ENCODE measurements at regions of chr16 and their contacts with region 1.

Region 1: GRCh38 chr16:27203429-27204231 is at the start of gene KDM8:
- DNase-seq: peak; percentile 100
- ATAC-seq: peak; percentile 90
- H3K4me3 Mint-ChIP-seq: peak within 1 kb of the TSS; percentile 89
- H3K27ac Mint-ChIP-seq: peak within 1 kb of the TSS; percentile 100
- H3K4me1 Mint-ChIP-seq: peaks cover 47% of the 10 kb centered on the region
- H3K27me3 Mint-ChIP-seq: no peaks in the 10 kb centered on the region
- total RNA-seq, gene KDM8: 9.8 to 10.4 TPM

Region 2: DNA sequence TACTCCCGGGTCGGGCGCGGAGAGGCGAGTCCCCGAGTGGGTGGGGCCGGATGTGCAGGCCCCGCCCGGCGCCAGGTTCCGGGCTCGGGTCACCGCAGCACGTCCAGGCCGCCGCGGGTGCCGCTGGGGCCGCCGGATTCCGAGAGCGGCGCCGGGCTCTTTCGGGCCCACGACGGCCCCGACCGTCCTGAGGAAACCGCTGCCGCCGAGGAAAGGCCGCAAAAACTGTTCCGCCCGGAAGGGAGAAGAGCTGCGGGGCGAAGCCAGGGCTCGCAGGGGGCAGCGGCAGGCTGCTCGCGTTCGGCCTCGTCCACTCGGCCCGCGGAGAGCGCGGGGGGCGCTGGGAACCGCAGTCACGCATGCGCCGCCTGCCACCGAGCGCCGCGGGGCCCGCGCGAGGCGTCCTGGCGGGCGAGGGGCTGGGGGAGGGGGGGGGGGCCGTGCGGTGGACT is 1946.1 kb before region 1 on chr16 and contains the start of gene ZKSCAN2:
- CTCF ChIA-PET with region 1: no interaction called
- POLR2A ChIA-PET with region 1: no interaction called
- intact Hi-C with region 1: loop called in 1 of 2 experiments (anchors 5 kb)
- DNase-seq: peak; percentile 92
- ATAC-seq: peak; percentile 82
- H3K4me3 Mint-ChIP-seq: peak within 1 kb of the TSS; percentile 93
- H3K27ac Mint-ChIP-seq: peak within 1 kb of the TSS; percentile 98
- H3K4me1 Mint-ChIP-seq: peaks cover 59% of the 10 kb centered on the region
- H3K27me3 Mint-ChIP-seq: no peaks in the 10 kb centered on the region
- total RNA-seq, gene ZKSCAN2: 5.5 to 5.6 TPM

Region 3: GRCh38 chr16:27127308-27127707 is 76.3 kb before region 1 on chr16:
- CTCF ChIA-PET with region 1: no interaction called
- POLR2A ChIA-PET with region 1: no interaction called
- intact Hi-C with region 1: no loop called
- DNase-seq: no peak
- ATAC-seq: no peak
- H3K4me3 Mint-ChIP-seq: no peak overlapping the region
- H3K27ac Mint-ChIP-seq: no peak overlapping the region
- H3K4me1 Mint-ChIP-seq: no peaks in the 10 kb centered on the region
- H3K27me3 Mint-ChIP-seq: no peaks in the 10 kb centered on the region

Region 4: GRCh38 chr16:27154705-27155521 is 48.7 kb before region 1 on chr16:
- CTCF ChIA-PET with region 1: interaction called, 6 read pairs
- POLR2A ChIA-PET with region 1: no interaction called
- intact Hi-C with region 1: loop called in 1 of 2 experiments (anchors 1 kb)
- DNase-seq: peak; percentile 86
- ATAC-seq: peak; percentile 87
- H3K4me3 Mint-ChIP-seq: no peak overlapping the region
- H3K27ac Mint-ChIP-seq: no peak overlapping the region
- H3K4me1 Mint-ChIP-seq: peaks cover 9% of the 10 kb centered on the region
- H3K27me3 Mint-ChIP-seq: no peaks in the 10 kb centered on the region

Region 5: GRCh38 chr16:27169511-27170071 is 34.0 kb before region 1 on chr16:
- CTCF ChIA-PET with region 1: interaction called, 5 read pairs
- POLR2A ChIA-PET with region 1: interaction called, 4 read pairs
- intact Hi-C with region 1: loop called (anchors 1 to 5 kb)
- DNase-seq: peak; percentile 86
- ATAC-seq: peak; percentile 92
- H3K4me3 Mint-ChIP-seq: peak overlapping the region; percentile 3
- H3K27ac Mint-ChIP-seq: peak overlapping the region; percentile 74
- H3K4me1 Mint-ChIP-seq: peaks cover 68% of the 10 kb centered on the region
- H3K27me3 Mint-ChIP-seq: no peaks in the 10 kb centered on the region

Region 6: DNA sequence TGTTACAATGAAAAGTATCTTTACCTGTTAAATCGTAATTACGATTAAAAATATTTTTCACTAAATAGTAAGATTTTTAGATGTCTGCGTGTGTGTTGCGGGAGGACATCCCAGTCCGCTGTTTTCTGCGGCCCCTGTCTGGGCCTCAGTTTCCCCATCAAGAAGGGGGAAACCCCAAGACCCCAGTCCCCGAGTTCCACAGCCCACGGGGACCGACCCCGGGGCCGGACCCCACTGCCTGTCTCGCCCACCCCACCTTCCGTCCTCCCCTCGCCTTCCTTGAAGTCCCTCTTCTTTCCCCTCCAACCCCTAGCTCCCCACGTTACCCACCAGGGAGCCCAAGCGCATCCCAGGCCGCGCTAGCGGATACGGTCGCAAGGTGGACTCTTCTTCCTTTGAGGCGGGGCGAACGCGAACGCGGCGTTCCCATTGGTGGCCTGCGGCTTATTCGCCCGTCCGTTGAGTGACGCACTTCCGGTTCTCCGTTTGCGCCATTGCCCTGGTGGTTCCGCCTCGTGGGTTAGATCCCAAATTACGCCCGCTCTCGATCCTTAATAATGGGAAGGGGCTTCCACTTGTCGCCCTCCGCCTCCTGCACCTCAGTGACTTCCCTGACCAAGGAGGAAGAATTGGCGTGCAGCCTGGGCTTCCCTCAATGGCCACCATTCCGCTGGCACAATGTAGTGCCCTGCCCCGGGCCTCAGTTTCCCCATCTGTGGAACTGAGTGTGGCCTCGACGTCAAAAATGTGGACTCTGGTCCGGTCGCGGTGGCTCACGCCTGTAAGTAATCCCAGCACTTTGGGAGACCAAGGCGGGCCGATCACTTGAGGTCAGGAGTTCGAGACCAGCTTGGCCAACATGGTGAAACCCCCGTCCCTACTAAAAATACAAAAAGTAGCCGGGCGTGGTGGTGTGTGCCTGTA is 65.0 kb after region 1 on chr16 and contains the start of gene NSMCE1:
- CTCF ChIA-PET with region 1: no interaction called
- POLR2A ChIA-PET with region 1: interaction called, 4 read pairs
- intact Hi-C with region 1: loop called in 1 of 2 experiments (anchors 1 kb)
- DNase-seq: peak; percentile 99
- ATAC-seq: peak; percentile 94
- H3K4me3 Mint-ChIP-seq: peak within 1 kb of the TSS; percentile 90
- H3K27ac Mint-ChIP-seq: peak within 1 kb of the TSS; percentile 95
- H3K4me1 Mint-ChIP-seq: peaks cover 72% of the 10 kb centered on the region
- H3K27me3 Mint-ChIP-seq: no peaks in the 10 kb centered on the region
- total RNA-seq, gene NSMCE1: 110 to 127 TPM

Region 7: GRCh38 chr16:27330542-27330941 is 126.9 kb after region 1 on chr16:
- CTCF ChIA-PET with region 1: no interaction called
- POLR2A ChIA-PET with region 1: no interaction called
- intact Hi-C with region 1: no loop called
- DNase-seq: no peak
- ATAC-seq: no peak
- H3K4me3 Mint-ChIP-seq: no peak overlapping the region
- H3K27ac Mint-ChIP-seq: peak overlapping the region; percentile 66
- H3K4me1 Mint-ChIP-seq: peaks cover 83% of the 10 kb centered on the region
- H3K27me3 Mint-ChIP-seq: no peaks in the 10 kb centered on the region

Region 8: GRCh38 chr16:27401768-27402568 is 198.3 kb after region 1 on chr16 and contains the start of gene IL21R:
- CTCF ChIA-PET with region 1: interaction called, 3 read pairs
- POLR2A ChIA-PET with region 1: interaction called, 5 read pairs
- intact Hi-C with region 1: loop called in 1 of 2 experiments (anchors 1 kb)
- DNase-seq: peak; percentile 94
- ATAC-seq: peak; percentile 60
- H3K4me3 Mint-ChIP-seq: peak within 1 kb of the TSS; percentile 99
- H3K27ac Mint-ChIP-seq: peak within 1 kb of the TSS; percentile 97
- H3K4me1 Mint-ChIP-seq: peaks cover 38% of the 10 kb centered on the region
- H3K27me3 Mint-ChIP-seq: no peaks in the 10 kb centered on the region
- total RNA-seq, gene IL21R: 61.8 to 73.5 TPM

Region 9: DNA sequence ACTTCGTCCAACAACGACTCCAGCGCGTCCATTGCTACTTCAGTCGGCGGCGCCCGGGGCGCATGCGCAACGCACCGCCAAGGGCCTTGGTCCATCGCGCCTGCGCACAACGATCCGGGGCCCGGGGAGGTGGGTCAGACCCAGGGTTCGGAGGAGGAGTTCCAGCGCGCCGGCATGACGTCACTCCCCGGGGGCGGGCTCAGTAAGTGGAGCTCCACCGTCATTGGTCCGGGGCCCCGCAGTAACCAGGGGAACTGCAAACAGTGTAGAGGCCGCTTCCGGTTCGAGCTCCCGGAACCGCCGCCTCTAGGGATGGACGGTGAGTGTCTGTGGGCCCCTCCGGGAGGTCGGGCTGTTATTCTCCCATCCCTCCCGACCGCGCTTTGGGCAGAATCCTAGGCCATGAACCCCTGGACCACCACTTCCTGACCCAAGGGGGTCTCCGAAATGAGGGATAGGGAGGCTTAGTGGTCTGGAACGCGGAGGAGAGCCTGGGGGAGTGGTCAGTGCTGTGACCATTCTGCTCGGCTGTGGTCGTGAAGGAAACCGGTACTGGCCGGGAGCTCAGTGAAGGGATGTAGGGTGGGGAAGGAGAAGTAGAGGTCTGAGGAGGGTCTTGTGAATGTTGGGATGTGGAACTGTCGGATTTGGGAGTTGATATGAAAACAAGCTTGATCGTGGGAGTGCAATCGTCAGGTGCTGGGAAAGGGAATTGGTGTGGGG is 346.4 kb after region 1 on chr16 and contains the starts of genes GTF3C1 and KATNIP:
- CTCF ChIA-PET with region 1: no interaction called
- POLR2A ChIA-PET with region 1: no interaction called
- intact Hi-C with region 1: loop called in 1 of 2 experiments (anchors 1 kb)
- DNase-seq: peak; percentile 100
- ATAC-seq: peak; percentile 98
- H3K4me3 Mint-ChIP-seq: peak within 1 kb of the TSS; percentile 94
- H3K27ac Mint-ChIP-seq: peak within 1 kb of the TSS; percentile 81
- H3K4me1 Mint-ChIP-seq: peaks cover 35% of the 10 kb centered on the region
- H3K27me3 Mint-ChIP-seq: no peaks in the 10 kb centered on the region
- total RNA-seq, gene GTF3C1: 48.8 to 50.7 TPM
- total RNA-seq, gene KATNIP: 12.3 to 12.8 TPM

Measured in activated CD4-positive, alpha-beta T cell treated with anti-CD3 and anti-CD28 coated beads for 36 hours (primary cell).